ENCODE measurements at regions of chr4 and their contacts with region 1.

Region 1: DNA sequence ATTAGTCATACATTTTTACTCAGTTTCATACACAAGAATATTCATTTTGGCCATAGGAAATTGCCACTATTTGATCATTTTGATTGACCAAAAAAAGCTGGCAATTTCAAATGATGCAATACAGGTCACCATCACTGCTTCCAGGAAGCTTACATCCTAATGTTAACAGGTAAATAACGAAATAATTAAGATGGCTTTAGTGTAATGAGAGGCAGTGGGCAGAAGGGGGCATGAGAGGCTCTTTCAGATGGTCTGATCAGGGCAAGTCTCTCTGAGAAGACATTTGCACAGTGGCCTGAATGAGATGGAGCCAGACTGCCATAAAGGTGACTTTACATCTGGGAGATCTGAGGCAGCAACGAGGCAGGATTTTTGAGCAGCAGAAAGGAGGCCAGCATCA is 170.7 kb downstream of the SLIT2 start:
- DNase-seq: peak; percentile 30
- ATAC-seq: peak; percentile 77
- H3K4me3 ChIP-seq: no peak overlapping the region
- H3K27ac ChIP-seq: no peak overlapping the region
- H3K4me1 ChIP-seq: no peaks in the 10 kb centered on the region
- H3K27me3 ChIP-seq: no peaks in the 10 kb centered on the region
- CTCF ChIP-seq: peak; percentile 72

Region 2: DNA sequence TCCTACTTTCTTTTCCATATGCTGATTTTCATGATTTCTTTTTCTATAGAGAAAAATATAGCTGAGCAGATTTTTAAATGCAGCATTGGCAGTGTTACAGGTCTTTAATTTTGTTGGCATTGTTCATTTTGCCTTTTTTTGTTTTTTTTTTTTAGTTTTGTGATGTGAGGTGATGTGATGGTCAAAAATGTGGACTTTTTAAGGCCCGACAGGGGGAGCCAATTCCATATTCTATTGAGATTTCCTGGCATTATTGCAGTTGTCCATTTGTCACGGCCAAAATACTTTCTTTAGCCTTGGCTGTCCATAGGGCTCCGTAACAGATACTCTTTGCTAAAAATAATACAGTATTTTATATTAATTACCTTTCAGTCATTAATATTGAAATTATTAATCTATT is 122.9 kb before region 1 on chr4:
- CTCF ChIA-PET with region 1: interaction called, 10 read pairs
- POLR2A ChIA-PET with region 1: no interaction called
- in situ Hi-C with region 1: no loop called
- intact Hi-C with region 1: no loop called
- DNase-seq: no peak
- ATAC-seq: no peak
- H3K4me3 ChIP-seq: no peak overlapping the region
- H3K27ac ChIP-seq: no peak overlapping the region
- H3K4me1 ChIP-seq: no peaks in the 10 kb centered on the region
- H3K27me3 ChIP-seq: no peaks in the 10 kb centered on the region
- CTCF ChIP-seq: peak; percentile 40; the same call in 1 of the 2 replicates

Region 3: GRCh38 chr4:20408611-20409010 is 13.8 kb before region 1 on chr4:
- CTCF ChIA-PET with region 1: interaction called, 10 read pairs
- POLR2A ChIA-PET with region 1: no interaction called
- in situ Hi-C with region 1: no loop called
- intact Hi-C with region 1: no loop called
- DNase-seq: no peak
- ATAC-seq: no peak
- H3K4me3 ChIP-seq: no peak overlapping the region
- H3K27ac ChIP-seq: no peak overlapping the region
- H3K4me1 ChIP-seq: no peaks in the 10 kb centered on the region
- H3K27me3 ChIP-seq: no peaks in the 10 kb centered on the region
- CTCF ChIP-seq: no peak

Region 4: GRCh38 chr4:20532871-20533870 is 110.8 kb after region 1 on chr4:
- CTCF ChIA-PET with region 1: no interaction called
- POLR2A ChIA-PET with region 1: interaction called, 13 read pairs
- in situ Hi-C with region 1: no loop called
- intact Hi-C with region 1: no loop called
- DNase-seq: no peak
- ATAC-seq: no peak
- H3K4me3 ChIP-seq: no peak overlapping the region
- H3K27ac ChIP-seq: no peak overlapping the region
- H3K4me1 ChIP-seq: no peaks in the 10 kb centered on the region
- H3K27me3 ChIP-seq: no peaks in the 10 kb centered on the region
- CTCF ChIP-seq: no peak

Region 5: DNA sequence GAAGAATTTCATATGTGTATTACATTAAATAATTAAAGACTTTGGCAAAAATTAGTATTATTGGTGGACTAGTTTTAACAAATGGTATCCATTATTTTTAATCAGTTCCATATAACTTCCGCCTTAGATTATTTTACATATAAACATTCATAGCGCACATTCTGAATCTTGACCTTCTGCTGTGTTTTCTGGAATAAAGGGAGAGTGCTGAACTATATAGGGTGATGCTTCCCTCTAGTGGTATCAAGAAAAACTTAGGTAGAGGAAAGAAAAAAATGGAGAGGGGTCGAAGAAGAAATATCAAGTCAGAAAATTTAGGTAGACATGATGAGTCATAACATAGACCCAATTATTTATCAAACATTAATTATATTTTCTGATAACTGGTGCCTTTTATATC is 122.2 kb after region 1 on chr4:
- CTCF ChIA-PET with region 1: no interaction called
- POLR2A ChIA-PET with region 1: no interaction called
- in situ Hi-C with region 1: no loop called
- intact Hi-C with region 1: loop called (anchors 2 kb)
- DNase-seq: no peak
- ATAC-seq: no peak
- H3K4me3 ChIP-seq: no peak overlapping the region
- H3K27ac ChIP-seq: no peak overlapping the region
- H3K4me1 ChIP-seq: no peaks in the 10 kb centered on the region
- H3K27me3 ChIP-seq: no peaks in the 10 kb centered on the region
- CTCF ChIP-seq: peak; percentile 50; the same call in 1 of the 2 replicates

Region 6: DNA sequence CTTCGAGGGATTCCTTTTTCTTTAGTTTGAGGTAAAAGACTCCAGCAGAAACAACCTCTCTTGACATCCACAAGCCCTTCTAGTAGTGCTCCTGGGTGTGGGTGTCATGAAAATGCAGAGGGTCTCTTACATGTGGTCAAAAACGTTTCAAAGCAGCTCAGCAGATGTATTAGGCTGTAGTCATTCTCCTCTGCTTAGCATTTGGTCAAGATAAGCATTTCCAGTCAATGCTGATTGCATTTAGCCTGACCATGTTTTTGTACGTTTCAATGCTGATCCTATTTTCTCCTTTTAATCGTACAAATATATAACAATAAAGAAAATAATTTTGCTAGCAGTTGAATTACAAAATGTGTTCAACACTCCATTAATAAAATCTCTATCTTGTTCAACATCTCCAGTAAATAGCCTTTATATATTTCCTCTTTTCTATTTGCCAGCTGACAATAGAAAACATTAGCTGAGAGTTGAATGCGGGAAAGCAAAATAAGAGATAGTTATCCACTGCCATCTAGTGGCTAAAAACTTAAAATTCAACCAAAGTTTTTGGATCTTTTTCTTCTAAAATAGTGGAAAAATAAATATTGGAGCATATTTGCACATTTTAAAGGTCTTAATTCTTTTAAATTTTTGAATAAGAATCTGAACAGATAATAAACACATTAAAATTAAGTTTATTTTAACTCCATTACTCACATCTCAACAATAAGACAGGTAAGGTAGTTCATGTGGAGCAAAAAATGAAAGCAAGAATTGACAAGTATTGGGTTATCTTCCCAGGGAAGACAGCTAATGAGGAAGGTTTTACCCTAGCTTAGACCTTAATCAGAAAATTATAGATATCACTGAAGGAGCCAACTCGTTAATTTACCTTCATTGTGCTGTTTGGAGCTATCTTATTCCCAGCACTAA is 262.7 kb after region 1 on chr4:
- CTCF ChIA-PET with region 1: no interaction called
- POLR2A ChIA-PET with region 1: no interaction called
- in situ Hi-C with region 1: no loop called
- intact Hi-C with region 1: loop called (anchors 2 kb)
- DNase-seq: no peak
- ATAC-seq: no peak
- H3K4me3 ChIP-seq: no peak overlapping the region
- H3K27ac ChIP-seq: no peak overlapping the region
- H3K4me1 ChIP-seq: no peaks in the 10 kb centered on the region
- H3K27me3 ChIP-seq: no peaks in the 10 kb centered on the region
- CTCF ChIP-seq: peak; percentile 58; the same call in 1 of the 2 replicates

Measured in Panc1 (cell line).